Dorsolateral prefrontal cortex (tissue), 120 donors: ENCODE measurements at regions of chr7 and their contacts with region 1.

Region 1: GRCh38 chr7:158407581-158408317 is 179.9 kb downstream of the PTPRN2 start:
- DNase-seq: no peak
- H3K4me3 ChIP-seq: no peak overlapping the region
- H3K27ac ChIP-seq: no peak overlapping the region
- H3K27me3 ChIP-seq: no peaks in the 10 kb centered on the region
- CTCF ChIP-seq: peak; percentile 7 to 92 (median 70)

Region 2: GRCh38 chr7:157250605-157251228 is 1157.0 kb before region 1 on chr7:
- intact Hi-C with region 1: loop called in 1 of 2 experiments (anchors 5 kb)
- DNase-seq: peak in 2 of 10 donors; percentile 45 to 53
- H3K4me3 ChIP-seq: no peak overlapping the region
- H3K27ac ChIP-seq: no peak overlapping the region
- H3K27me3 ChIP-seq: no peaks in the 10 kb centered on the region
- CTCF ChIP-seq: peak; percentile 55 to 84 (median 71)

Region 3: GRCh38 chr7:157432957-157433576 is 974.7 kb before region 1 on chr7:
- intact Hi-C with region 1: loop called in 1 of 2 experiments (anchors 2 kb)
- DNase-seq: peak in 8 of 10 donors; percentile 26 to 77 (median 62)
- H3K4me3 ChIP-seq: peak overlapping the region in 52 of 59 donors; percentile 10 to 61 (median 40)
- H3K27ac ChIP-seq: no peak overlapping the region
- H3K27me3 ChIP-seq: no peaks in the 10 kb centered on the region
- CTCF ChIP-seq: peak; percentile 47 to 86 (median 72)

Region 4: GRCh38 chr7:158431941-158432347 is 24.2 kb after region 1 on chr7:
- intact Hi-C with region 1: no loop called
- DNase-seq: no peak
- H3K4me3 ChIP-seq: no peak overlapping the region
- H3K27ac ChIP-seq: no peak overlapping the region
- H3K27me3 ChIP-seq: no peaks in the 10 kb centered on the region
- CTCF ChIP-seq: no peak